Endothelial cell of umbilical vein (primary cell): ENCODE measurements at regions of chr16 and their contacts with region 1.

Region 1: GRCh38 chr16:56317998-56318826 is 107.1 kb downstream of the AMFR start:
- DNase-seq: peak; percentile 71
- H3K4me3 ChIP-seq: peak overlapping the region in 1 of 3 experiments; percentile 10
- H3K27ac ChIP-seq: no peak overlapping the region
- H3K4me1 ChIP-seq: no peaks in the 10 kb centered on the region
- H3K27me3 ChIP-seq: peaks cover 4 to 6% of the 10 kb centered on the region in 2 experiments
- CTCF ChIP-seq: peak; percentile 89 to 94
- POLR2A ChIP-seq: no peak

Region 2: GRCh38 chr16:55842369-55843104 is 475.7 kb before region 1 on chr16:
- CTCF ChIA-PET with region 1: interaction called, 4 read pairs
- POLR2A ChIA-PET with region 1: no interaction called
- dilution Hi-C with region 1: no loop called
- intact Hi-C with region 1: loop called (anchors 10 kb)
- DNase-seq: peak; percentile 48
- H3K4me3 ChIP-seq: no peak overlapping the region
- H3K27ac ChIP-seq: no peak overlapping the region
- H3K4me1 ChIP-seq: no peaks in the 10 kb centered on the region
- H3K27me3 ChIP-seq: no peaks in the 10 kb centered on the region
- CTCF ChIP-seq: peak; percentile 47 to 56
- POLR2A ChIP-seq: no peak

Region 3: DNA sequence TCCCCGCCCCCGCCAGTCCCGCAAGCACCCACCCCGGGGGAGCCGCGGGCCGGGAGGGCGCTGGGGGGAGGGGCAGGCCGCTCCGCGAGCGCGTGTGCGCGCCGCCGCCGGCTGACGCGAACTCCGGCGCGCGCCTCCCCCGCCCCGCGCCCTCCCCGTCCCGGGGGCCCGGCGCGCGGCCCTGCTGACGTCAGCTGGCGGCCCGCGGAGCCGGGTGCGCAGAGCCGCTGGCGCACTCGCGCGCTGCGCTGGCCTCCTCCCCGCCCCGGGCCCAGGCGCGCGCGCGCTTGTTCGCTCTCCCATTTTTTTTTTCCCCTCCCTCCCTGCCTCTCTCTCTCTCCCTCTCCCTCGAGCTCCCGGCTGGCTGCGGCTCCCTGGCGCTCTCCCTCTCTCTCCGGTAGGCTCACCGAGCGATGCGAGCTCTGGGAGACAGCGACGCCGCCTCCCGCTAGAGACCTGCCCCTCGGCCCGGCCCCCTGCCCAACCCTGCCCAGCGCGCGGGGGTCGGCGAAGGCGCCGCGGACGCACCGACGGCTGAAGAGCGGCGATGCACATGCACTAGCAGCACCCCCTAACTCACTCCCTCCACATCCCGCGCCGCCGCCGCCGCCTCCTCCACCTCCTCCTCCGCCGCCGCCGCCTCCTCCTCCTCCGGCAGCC is 126.9 kb before region 1 on chr16 and contains the start of gene GNAO1:
- CTCF ChIA-PET with region 1: no interaction called
- POLR2A ChIA-PET with region 1: no interaction called
- dilution Hi-C with region 1: no loop called
- intact Hi-C with region 1: loop called (anchors 10 kb)
- DNase-seq: peak; percentile 12
- H3K4me3 ChIP-seq: peak within 1 kb of the TSS; percentile 32 to 44 (median 39)
- H3K27ac ChIP-seq: no peak within 1 kb of the TSS
- H3K4me1 ChIP-seq: peaks cover 4% of the 10 kb centered on the region
- H3K27me3 ChIP-seq: peaks cover 58 to 69% of the 10 kb centered on the region in 2 experiments
- CTCF ChIP-seq: no peak
- POLR2A ChIP-seq: no peak
- total RNA-seq, gene GNAO1: not detected in 2 replicates

Region 4: DNA sequence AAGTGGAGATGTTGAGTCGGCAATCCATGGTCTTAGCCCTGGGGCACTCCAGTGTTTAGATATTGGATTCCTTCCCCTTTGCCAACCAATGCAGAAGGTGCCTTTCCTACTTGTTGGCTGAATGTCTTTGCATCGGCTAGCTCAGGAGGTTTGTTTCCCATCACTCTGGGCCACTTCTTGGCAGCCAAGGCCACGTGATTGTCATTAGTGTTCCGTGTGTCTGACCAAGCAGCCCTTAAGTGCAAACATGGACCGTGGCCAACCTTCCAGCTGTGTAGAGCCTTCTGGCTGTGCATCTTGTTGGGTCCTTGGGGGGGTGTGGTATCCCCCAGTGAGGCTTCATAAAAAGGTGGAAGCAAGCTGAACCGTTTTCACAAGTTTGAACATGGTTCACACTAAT is 61.0 kb before region 1 on chr16:
- CTCF ChIA-PET with region 1: no interaction called
- POLR2A ChIA-PET with region 1: no interaction called
- dilution Hi-C with region 1: no loop called
- intact Hi-C with region 1: no loop called
- DNase-seq: no peak
- H3K4me3 ChIP-seq: no peak overlapping the region
- H3K27ac ChIP-seq: no peak overlapping the region
- H3K4me1 ChIP-seq: no peaks in the 10 kb centered on the region
- H3K27me3 ChIP-seq: peaks cover 0 to 2% of the 10 kb centered on the region in 2 experiments
- CTCF ChIP-seq: no peak
- POLR2A ChIP-seq: no peak

Region 5: GRCh38 chr16:56332464-56333079 is 14.4 kb after region 1 on chr16:
- CTCF ChIA-PET with region 1: interaction called, 21 read pairs
- POLR2A ChIA-PET with region 1: no interaction called
- dilution Hi-C with region 1: no loop called
- intact Hi-C with region 1: no loop called
- DNase-seq: peak; percentile 35
- H3K4me3 ChIP-seq: no peak overlapping the region
- H3K27ac ChIP-seq: no peak overlapping the region
- H3K4me1 ChIP-seq: no peaks in the 10 kb centered on the region
- H3K27me3 ChIP-seq: no peaks in the 10 kb centered on the region
- CTCF ChIP-seq: peak in 1 of 2 donors; percentile 60
- POLR2A ChIP-seq: no peak

Region 6: GRCh38 chr16:56389554-56389953 is 71.3 kb after region 1 on chr16:
- CTCF ChIA-PET with region 1: no interaction called
- POLR2A ChIA-PET with region 1: no interaction called
- dilution Hi-C with region 1: no loop called
- intact Hi-C with region 1: no loop called
- DNase-seq: no peak
- H3K4me3 ChIP-seq: no peak overlapping the region
- H3K27ac ChIP-seq: no peak overlapping the region
- H3K4me1 ChIP-seq: no peaks in the 10 kb centered on the region
- H3K27me3 ChIP-seq: no peaks in the 10 kb centered on the region
- CTCF ChIP-seq: no peak
- POLR2A ChIP-seq: no peak

Region 7: DNA sequence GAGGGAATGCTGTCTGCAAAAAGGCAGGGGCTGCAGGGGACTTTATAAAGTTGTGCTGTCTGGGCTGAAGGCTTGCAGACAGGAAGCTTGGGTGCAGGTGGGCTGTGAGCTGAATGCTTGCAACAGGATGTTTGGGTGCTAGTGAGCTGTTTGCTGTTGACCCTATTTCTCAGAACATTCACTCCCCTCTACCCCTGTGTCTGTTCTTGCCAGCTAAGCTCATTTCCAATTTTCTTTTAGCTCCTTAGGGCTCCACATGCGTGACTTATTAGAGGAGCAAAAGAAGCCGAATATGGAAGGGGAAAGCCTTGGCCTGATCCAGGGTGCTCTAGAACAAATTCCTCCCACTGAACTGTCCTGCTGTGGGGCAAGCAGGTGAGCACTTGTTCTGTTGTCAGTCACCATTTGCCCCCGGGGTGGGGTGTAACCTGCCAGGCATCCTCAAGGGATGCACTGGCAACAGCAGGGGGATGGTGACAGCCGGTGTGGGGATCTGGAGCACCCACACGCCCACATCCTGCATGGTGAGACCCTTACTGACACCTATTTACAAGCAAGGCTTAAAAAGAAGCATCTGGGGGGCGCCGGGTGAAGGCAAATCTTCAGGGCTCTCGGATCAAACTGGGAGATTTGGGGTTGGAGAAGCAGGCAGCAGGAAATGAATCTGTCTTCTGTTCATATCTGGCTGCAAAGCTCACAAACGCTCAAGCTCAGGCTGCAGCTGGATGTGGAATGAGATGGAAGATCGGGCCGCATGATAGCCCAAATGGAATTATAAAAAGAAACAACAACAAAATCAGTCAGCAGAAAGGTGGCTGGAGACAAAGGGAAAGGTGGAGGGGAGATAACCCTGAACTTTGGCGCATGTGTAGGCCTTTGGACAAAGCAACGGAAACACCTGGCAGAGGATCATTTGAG is 390.6 kb after region 1 on chr16:
- CTCF ChIA-PET with region 1: no interaction called
- POLR2A ChIA-PET with region 1: no interaction called
- dilution Hi-C with region 1: no loop called
- intact Hi-C with region 1: loop called (anchors 10 kb)
- DNase-seq: no peak
- H3K4me3 ChIP-seq: no peak overlapping the region
- H3K27ac ChIP-seq: no peak overlapping the region
- H3K4me1 ChIP-seq: no peaks in the 10 kb centered on the region
- H3K27me3 ChIP-seq: no peaks in the 10 kb centered on the region
- CTCF ChIP-seq: no peak
- POLR2A ChIP-seq: no peak